ENCODE measurements at regions of chr17 and their contacts with region 1.

Region 1: GRCh38 chr17:3647769-3648555 is 11.4 kb downstream of the CTNS start:
- DNase-seq: peak; percentile 7
- ATAC-seq: peak; percentile 98
- H3K4me3 ChIP-seq: no peak overlapping the region
- H3K27ac ChIP-seq: no peak overlapping the region; the same call in 1 of the 2 replicates
- H3K4me1 ChIP-seq: no peaks in the 10 kb centered on the region
- H3K27me3 ChIP-seq: no peaks in the 10 kb centered on the region
- CTCF ChIP-seq: peak; percentile 41 to 66 (median 61); a peak in 5 of 6 replicates
- POLR2A ChIP-seq: no peak
- RAD21 ChIP-seq: peak; percentile 50

Region 2: DNA sequence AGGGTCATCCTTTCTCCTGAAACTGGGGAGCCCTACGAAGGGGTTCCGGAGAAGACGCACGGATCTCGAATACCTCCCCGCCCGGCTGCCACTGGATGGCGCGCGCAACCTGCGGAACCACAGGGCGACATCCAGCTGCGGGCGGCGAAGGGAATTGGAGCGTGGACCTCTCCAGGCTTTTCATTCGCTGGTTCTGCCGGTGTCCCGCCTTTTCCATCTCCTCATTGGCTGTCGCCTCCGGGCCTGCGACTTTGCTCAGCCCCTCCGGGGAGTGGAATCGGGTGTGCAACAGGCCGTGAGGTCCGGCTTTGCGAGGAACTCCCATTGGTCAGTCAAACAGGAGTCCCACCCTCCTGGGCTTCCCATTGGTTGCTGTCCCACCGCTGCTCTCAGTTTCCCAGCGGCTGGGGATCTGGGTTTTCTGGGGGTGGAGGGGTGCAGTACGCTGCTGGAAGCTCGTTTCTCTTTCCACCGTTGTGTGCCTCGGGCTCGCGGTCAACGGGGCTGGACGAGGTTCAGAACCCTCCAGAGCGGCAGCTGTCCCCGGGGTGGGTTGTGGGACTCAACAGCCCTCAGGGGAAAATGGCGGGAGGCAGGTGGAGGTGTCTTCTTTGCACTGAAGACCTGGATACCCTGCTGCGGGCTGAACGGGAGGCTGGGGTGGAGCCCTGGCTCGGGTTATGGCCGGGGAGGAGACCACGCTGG is 599.0 kb before region 1 on chr17:
- CTCF ChIA-PET with region 1: interaction called, 22 read pairs
- POLR2A ChIA-PET with region 1: no interaction called
- RAD21 ChIA-PET with region 1: no interaction called
- intact Hi-C with region 1: loop called (anchors 5 kb)
- DNase-seq: peak; percentile 98
- ATAC-seq: peak; percentile 99
- H3K4me3 ChIP-seq: peak overlapping the region; percentile 70 to 71
- H3K27ac ChIP-seq: peak overlapping the region; percentile 47; the same call in 1 of the 2 replicates
- H3K4me1 ChIP-seq: peaks cover 5 to 17% of the 10 kb centered on the region in 2 experiments; a peak in 3 of 4 replicates
- H3K27me3 ChIP-seq: no peaks in the 10 kb centered on the region
- CTCF ChIP-seq: peak; percentile 50 to 78 (median 74)
- POLR2A ChIP-seq: peak; percentile 28
- RAD21 ChIP-seq: peak; percentile 96

Region 3: DNA sequence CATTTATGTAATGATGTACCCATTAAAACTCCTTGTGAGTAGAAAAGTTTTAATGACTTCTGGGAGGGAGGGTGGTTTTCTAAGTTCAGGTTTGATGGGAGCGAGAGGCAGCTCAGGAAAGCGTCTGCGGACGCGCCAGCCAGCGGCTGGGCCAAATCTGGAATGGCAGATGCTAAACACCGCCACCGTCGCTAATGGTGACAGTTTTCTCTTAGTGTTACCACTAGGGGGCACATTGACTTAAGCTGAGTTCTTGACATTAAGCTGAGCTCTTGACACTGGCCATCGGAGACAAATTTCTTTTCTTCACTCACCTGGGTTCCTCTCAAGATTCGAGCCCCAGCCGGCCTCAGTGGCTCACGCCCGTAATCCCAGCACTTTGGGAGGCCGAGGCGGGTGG is 45.5 kb before region 1 on chr17:
- CTCF ChIA-PET with region 1: interaction called, 16 read pairs
- POLR2A ChIA-PET with region 1: no interaction called
- RAD21 ChIA-PET with region 1: no interaction called
- intact Hi-C with region 1: no loop called
- DNase-seq: peak; percentile 43
- ATAC-seq: peak; percentile 83
- H3K4me3 ChIP-seq: no peak overlapping the region
- H3K27ac ChIP-seq: no peak overlapping the region
- H3K4me1 ChIP-seq: no peaks in the 10 kb centered on the region
- H3K27me3 ChIP-seq: no peaks in the 10 kb centered on the region
- CTCF ChIP-seq: peak; percentile 37 to 69 (median 67); a peak in 5 of 6 replicates
- POLR2A ChIP-seq: no peak
- RAD21 ChIP-seq: peak; percentile 51

Region 4: GRCh38 chr17:3636154-3636907 is 11.6 kb before region 1 on chr17 and contains the starts of genes CTNS and SHPK:
- CTCF ChIA-PET with region 1: interaction called, 10 read pairs
- POLR2A ChIA-PET with region 1: interaction called, 4 read pairs
- RAD21 ChIA-PET with region 1: interaction called in 1 of 2 experiments, 5 read pairs
- intact Hi-C with region 1: no loop called
- DNase-seq: peak; percentile 90
- ATAC-seq: peak; percentile 95
- H3K4me3 ChIP-seq: peak within 1 kb of the TSS; percentile 94
- H3K27ac ChIP-seq: peak within 1 kb of the TSS; percentile 94
- H3K4me1 ChIP-seq: peaks cover 6 to 15% of the 10 kb centered on the region in 2 experiments; a peak in 3 of 4 replicates
- H3K27me3 ChIP-seq: no peaks in the 10 kb centered on the region
- CTCF ChIP-seq: no peak
- POLR2A ChIP-seq: peak; percentile 59
- RAD21 ChIP-seq: no peak
- total RNA-seq, gene CTNS: 7.9 TPM
- total RNA-seq, gene SHPK: 19.6 TPM